WTC11 (cell line): ENCODE measurements at regions of chr1 and their contacts with region 1.

Region 1: DNA sequence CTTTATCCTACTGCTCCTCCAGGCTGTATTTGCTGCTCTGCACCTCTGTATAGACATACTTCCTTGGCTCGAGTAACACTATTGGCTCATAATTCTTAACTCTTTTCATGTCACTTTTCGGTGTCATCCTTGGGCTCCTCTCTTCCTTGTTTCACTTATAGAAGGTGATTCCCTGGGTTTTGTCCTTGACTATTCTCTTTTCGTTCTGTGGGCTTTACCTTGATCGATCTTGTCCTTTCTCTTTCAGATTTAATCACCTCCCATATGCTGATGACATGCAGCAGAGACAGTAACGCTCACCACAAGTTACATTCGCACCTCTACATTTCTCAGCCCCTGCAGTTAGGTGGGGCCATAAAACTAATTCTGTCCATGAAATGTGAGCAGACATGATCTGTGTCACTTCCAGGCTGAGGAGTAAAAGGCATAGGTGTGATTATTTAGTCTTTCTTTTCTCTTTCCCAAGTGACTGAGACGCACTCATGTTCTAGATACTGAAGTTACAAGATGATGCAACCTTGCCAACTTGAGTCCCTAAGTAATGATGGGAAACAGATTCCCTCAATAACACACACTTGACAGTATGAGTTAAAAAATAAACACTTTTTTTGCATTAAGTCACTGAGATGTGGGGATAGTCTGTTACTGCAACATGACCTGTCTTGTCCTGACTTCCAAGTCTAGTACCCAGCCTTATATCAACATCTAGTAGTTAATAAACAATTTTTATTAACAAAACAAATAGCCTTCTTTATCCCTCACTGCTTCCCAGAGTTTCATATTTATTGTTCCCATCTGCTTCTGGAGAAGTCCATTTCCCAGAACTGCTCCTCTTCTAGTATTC is 49.9 kb upstream of the HAO2 start:
- DNase-seq: no peak
- ATAC-seq: no peak
- H3K4me3 Mint-ChIP-seq: no peak overlapping the region
- H3K27ac Mint-ChIP-seq: no peak overlapping the region
- H3K4me1 Mint-ChIP-seq: peaks cover 34% of the 10 kb centered on the region
- H3K27me3 Mint-ChIP-seq: no peaks in the 10 kb centered on the region
- CTCF ChIP-seq: no peak

Region 2: GRCh38 chr1:119294722-119295121 is 24.0 kb before region 1 on chr1:
- CTCF ChIA-PET with region 1: interaction called, 18 read pairs
- POLR2A ChIA-PET with region 1: no interaction called
- DNase-seq: no peak
- ATAC-seq: peak; percentile 79
- H3K4me3 Mint-ChIP-seq: no peak overlapping the region
- H3K27ac Mint-ChIP-seq: peak overlapping the region; percentile 24; the same call in 1 of the 2 replicates
- H3K4me1 Mint-ChIP-seq: peaks cover 38% of the 10 kb centered on the region
- H3K27me3 Mint-ChIP-seq: no peaks in the 10 kb centered on the region
- CTCF ChIP-seq: no peak

Region 3: GRCh38 chr1:119333163-119333896 is 14.6 kb after region 1 on chr1:
- CTCF ChIA-PET with region 1: interaction called, 13 read pairs
- POLR2A ChIA-PET with region 1: no interaction called
- DNase-seq: no peak
- ATAC-seq: no peak
- H3K4me3 Mint-ChIP-seq: no peak overlapping the region
- H3K27ac Mint-ChIP-seq: peak overlapping the region; percentile 99
- H3K4me1 Mint-ChIP-seq: peaks cover 64% of the 10 kb centered on the region
- H3K27me3 Mint-ChIP-seq: peaks cover 3% of the 10 kb centered on the region
- CTCF ChIP-seq: no peak

Region 4: DNA sequence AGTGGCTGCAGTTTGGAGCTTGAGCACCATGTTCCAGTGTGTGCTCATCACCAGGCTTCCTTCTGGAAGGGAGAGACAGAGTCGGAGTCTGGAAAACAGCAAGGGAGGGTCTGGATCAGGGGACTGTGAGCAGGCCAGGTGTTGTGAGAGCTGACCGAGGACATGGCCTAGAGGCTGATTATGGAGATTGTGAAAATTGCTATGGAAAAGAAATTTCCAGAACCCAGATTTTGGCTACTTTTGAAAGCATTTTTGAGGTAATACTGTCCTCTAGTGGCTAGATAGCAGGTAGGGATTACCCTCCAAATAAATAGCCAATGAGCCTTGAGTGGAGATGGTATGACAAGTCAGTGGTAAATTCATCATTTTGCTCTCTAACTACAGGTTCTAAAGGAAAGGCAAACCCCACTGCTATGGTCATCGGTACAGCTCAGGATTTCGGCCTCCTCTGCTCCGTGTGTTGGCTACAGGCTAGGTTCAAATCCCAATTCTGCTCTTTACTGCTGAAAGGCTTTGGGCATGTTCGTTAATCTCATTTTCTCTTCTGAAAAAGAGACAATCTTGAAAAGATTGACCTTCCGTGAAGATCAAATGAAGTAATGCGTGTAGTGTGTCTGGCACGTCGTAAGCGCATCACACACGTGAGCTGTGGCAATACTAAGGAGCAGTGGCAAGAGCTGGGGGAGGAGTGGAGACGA is 48.9 kb after region 1 on chr1:
- CTCF ChIA-PET with region 1: interaction called, 41 read pairs
- POLR2A ChIA-PET with region 1: no interaction called
- DNase-seq: no peak
- ATAC-seq: peak; percentile 65
- H3K4me3 Mint-ChIP-seq: no peak overlapping the region
- H3K27ac Mint-ChIP-seq: no peak overlapping the region
- H3K4me1 Mint-ChIP-seq: peaks cover 47% of the 10 kb centered on the region
- H3K27me3 Mint-ChIP-seq: peaks cover 17% of the 10 kb centered on the region
- CTCF ChIP-seq: peak; percentile 88